Upper lobe of right lung (tissue), 1 donor: ENCODE measurements at regions of chr1 and their contacts with region 1.

Region 1: GRCh38 chr1:3089490-3089889 is 20.5 kb downstream of the PRDM16 start:
- DNase-seq: no peak
- ATAC-seq: no peak
- H3K4me3 ChIP-seq: no peak overlapping the region
- H3K27ac ChIP-seq: no peak overlapping the region
- H3K4me1 ChIP-seq: no peaks in the 10 kb centered on the region
- H3K27me3 ChIP-seq: peaks cover 6% of the 10 kb centered on the region
- CTCF ChIP-seq: no peak

Region 2: DNA sequence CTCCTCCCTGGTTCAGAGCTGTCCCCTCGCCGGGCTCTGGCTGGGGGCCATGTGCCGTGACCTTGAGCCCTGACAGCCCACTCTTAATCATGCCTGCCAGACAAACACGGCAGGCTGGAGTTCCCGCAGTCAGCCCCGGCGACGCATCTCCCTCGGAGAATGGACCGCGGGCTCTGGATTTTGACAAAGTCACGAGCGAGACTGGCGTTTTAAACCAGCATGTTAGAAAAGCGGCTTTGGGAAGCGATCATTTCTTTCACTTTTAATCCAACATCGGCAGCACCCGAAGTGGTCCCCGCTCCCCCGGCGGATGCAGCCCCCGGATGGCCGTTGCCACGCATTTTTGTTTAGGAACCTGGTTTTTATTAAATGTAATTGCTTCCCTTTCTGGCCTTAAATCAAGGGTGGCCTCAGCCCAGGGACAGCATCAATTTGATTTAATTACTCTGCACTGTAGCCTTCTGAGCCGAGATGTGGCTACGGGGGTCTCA is 50.4 kb after region 1 on chr1:
- intact Hi-C with region 1: loop called (anchors 2 kb)
- DNase-seq: no peak
- ATAC-seq: no peak
- H3K4me3 ChIP-seq: no peak overlapping the region
- H3K27ac ChIP-seq: no peak overlapping the region
- H3K4me1 ChIP-seq: no peaks in the 10 kb centered on the region
- H3K27me3 ChIP-seq: no peaks in the 10 kb centered on the region
- CTCF ChIP-seq: no peak